ENCODE measurements at regions of chr14 and their contacts with region 1.

Region 1: DNA sequence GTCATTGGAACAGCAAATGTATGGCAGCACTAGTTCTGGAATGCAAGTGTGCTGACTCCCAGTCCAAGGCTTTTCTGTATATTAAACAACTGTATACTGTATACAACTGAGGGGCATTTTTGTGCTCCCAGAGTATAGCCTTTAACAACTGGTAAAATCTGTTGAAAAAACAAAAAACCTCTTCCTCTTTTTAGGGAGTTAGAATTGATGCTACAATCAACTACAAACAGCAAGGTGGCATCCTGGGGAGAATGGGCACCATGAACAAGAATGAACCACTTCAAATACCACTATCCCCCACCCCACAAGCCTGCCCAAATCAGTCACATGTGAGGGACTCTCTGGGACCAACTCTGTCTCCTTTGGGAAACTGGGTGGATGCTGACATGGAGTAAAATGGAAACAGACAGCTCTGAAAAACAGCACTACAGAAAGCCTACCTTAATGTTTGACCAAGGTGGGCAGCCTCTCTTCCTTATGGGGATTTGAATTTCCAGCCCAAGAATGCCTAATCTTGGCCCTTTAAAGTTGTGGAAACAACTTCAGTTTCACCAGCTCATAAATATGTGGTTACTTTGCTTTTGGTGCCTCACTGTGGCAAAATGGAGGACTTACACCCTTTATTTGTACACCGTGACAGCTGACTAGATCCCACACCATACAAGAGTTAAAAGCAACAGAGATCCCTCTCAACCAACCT is 7.5 kb downstream of the VTI1B start:
- DNase-seq: peak; percentile 56
- ATAC-seq: peak; percentile 90
- H3K4me3 ChIP-seq: no peak overlapping the region
- H3K27ac ChIP-seq: no peak overlapping the region
- H3K4me1 ChIP-seq: no peaks in the 10 kb centered on the region
- H3K27me3 ChIP-seq: no peaks in the 10 kb centered on the region
- CTCF ChIP-seq: peak; percentile 83
- EP300 ChIP-seq: no peak
- POLR2A ChIP-seq: no peak
- RAD21 ChIP-seq: peak; percentile 80

Region 2: DNA sequence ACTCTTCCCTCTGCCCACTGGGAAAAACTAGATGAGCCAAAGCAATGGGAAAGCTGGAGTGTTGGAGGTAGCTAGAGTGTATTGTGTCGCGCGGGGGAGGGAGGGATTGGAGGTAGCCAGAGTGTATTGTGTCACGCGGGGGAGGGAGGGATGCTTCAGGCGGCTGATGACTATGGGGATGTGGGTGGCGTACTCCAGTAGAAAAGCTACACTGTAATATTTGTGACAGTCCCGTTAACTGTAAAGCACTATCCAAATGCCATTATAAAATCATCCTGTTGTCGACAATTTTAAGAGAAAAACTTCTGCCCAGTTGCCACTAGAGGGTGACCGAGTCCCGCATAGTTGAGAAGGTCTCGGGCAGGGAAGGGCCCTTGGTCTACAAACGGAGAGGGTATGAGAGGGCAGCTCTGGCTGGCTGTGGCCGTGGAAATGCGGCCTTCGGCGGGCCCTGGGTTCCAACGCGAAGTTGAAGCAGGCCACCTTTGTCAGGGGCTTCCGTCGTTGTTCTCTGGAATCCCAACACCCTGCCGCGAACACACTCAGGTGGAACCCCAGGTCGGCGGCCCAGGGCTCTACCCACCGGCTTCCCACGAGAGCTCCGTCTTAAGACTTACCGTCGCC is 239.8 kb before region 1 on chr14:
- CTCF ChIA-PET with region 1: interaction called, 3 read pairs
- POLR2A ChIA-PET with region 1: no interaction called
- in situ Hi-C with region 1: no loop called
- intact Hi-C with region 1: loop called (anchors 10 kb)
- DNase-seq: peak; percentile 76
- ATAC-seq: peak; percentile 82
- H3K4me3 ChIP-seq: peak overlapping the region in 1 of 3 experiments; percentile 41; a peak in 1 of 6 replicates
- H3K27ac ChIP-seq: no peak overlapping the region
- H3K4me1 ChIP-seq: peaks cover 32% of the 10 kb centered on the region
- H3K27me3 ChIP-seq: peaks cover 0 to 6% of the 10 kb centered on the region in 2 experiments; a peak in 2 of 5 replicates
- CTCF ChIP-seq: peak; percentile 91
- EP300 ChIP-seq: no peak
- POLR2A ChIP-seq: no peak
- RAD21 ChIP-seq: peak; percentile 82

Region 3: GRCh38 chr14:67526676-67527459 is 140.0 kb before region 1 on chr14:
- CTCF ChIA-PET with region 1: interaction called, 5 read pairs
- POLR2A ChIA-PET with region 1: no interaction called
- in situ Hi-C with region 1: no loop called
- intact Hi-C with region 1: loop called (anchors 10 kb)
- DNase-seq: peak; percentile 43
- ATAC-seq: peak; percentile 96
- H3K4me3 ChIP-seq: no peak overlapping the region
- H3K27ac ChIP-seq: no peak overlapping the region
- H3K4me1 ChIP-seq: peaks cover 38% of the 10 kb centered on the region
- H3K27me3 ChIP-seq: peaks cover 0 to 14% of the 10 kb centered on the region in 2 experiments; a peak in 2 of 5 replicates
- CTCF ChIP-seq: peak; percentile 92
- EP300 ChIP-seq: no peak
- POLR2A ChIP-seq: no peak
- RAD21 ChIP-seq: peak; percentile 69

Region 4: GRCh38 chr14:67583711-67584644 is 82.9 kb before region 1 on chr14:
- CTCF ChIA-PET with region 1: interaction called, 49 read pairs
- POLR2A ChIA-PET with region 1: interaction called, 6 read pairs
- in situ Hi-C with region 1: loop called (anchors 10 kb)
- intact Hi-C with region 1: loop called (anchors 1 kb)
- DNase-seq: peak; percentile 58
- ATAC-seq: peak; percentile 94
- H3K4me3 ChIP-seq: no peak overlapping the region
- H3K27ac ChIP-seq: no peak overlapping the region
- H3K4me1 ChIP-seq: peaks cover 9% of the 10 kb centered on the region
- H3K27me3 ChIP-seq: no peaks in the 10 kb centered on the region
- CTCF ChIP-seq: peak; percentile 88
- EP300 ChIP-seq: no peak
- POLR2A ChIP-seq: no peak
- RAD21 ChIP-seq: peak; percentile 80

Region 5: GRCh38 chr14:67599698-67600561 is 67.0 kb before region 1 on chr14 and contains the start of gene PIGH:
- CTCF ChIA-PET with region 1: interaction called, 11 read pairs
- POLR2A ChIA-PET with region 1: interaction called, 7 read pairs
- in situ Hi-C with region 1: no loop called
- intact Hi-C with region 1: no loop called
- DNase-seq: peak; percentile 83
- ATAC-seq: peak; percentile 97
- H3K4me3 ChIP-seq: peak within 1 kb of the TSS; percentile 82 to 89 (median 87)
- H3K27ac ChIP-seq: peak within 1 kb of the TSS; percentile 74
- H3K4me1 ChIP-seq: peaks cover 43% of the 10 kb centered on the region
- H3K27me3 ChIP-seq: no peaks in the 10 kb centered on the region; a peak in 1 of 5 replicates
- CTCF ChIP-seq: peak; percentile 76
- EP300 ChIP-seq: peak in 1 of 2 experiments; percentile 42; a peak in 1 of 4 replicates
- POLR2A ChIP-seq: peak; percentile 62 to 72
- RAD21 ChIP-seq: peak; percentile 83
- total RNA-seq, gene PIGH: 18.7 and 30.0 TPM in 2 replicates

Region 6: DNA sequence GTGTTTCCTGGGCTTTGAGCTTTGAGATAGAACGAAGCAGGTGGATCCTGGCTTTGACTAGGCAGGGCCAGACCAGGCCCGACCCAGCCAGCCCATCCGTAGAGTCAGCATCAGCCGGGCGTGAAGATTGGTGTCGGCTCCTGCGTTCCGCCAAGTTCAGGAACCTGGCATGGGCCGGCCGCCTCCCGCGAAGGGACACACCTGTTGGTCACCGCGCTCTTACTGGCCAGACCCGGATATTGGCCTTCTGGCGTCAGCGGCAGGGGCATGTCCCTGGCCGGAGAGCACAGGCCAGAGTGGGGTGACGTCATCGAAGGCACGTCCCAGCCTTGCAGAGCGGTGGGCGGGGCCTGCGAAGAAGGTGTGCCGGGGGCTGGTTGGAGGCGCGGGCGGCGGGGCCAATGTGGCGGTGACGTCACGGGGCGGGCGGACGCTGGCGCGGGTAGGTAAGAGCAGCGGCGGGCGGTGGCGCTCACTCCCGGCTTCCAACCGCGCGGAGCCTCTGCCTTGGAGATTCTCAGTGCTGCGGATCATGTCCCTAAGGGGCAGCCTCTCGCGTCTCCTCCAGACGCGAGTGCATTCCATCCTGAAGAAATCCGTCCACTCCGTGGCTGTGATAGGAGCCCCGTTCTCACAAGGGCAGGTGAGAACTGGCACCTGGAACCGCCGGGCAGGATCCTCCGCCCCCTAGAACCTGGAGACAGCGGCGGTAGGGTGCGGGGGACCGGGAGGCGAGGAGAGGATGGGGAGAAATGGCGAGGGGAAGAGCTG is 47.3 kb before region 1 on chr14 and contains the start of gene ARG2:
- CTCF ChIA-PET with region 1: interaction called, 38 read pairs
- POLR2A ChIA-PET with region 1: interaction called, 3 read pairs
- in situ Hi-C with region 1: loop called (anchors 5 kb)
- intact Hi-C with region 1: loop called (anchors 1 kb)
- DNase-seq: peak; percentile 95
- ATAC-seq: peak; percentile 94
- H3K4me3 ChIP-seq: peak within 1 kb of the TSS; percentile 81 to 95 (median 88)
- H3K27ac ChIP-seq: peak within 1 kb of the TSS; percentile 61
- H3K4me1 ChIP-seq: peaks cover 51% of the 10 kb centered on the region
- H3K27me3 ChIP-seq: 0 out of 5 replicates have a peak, but pooled peaks cover 0 to 5% of the 10 kb centered on the region in 2 experiments
- CTCF ChIP-seq: peak; percentile 66
- EP300 ChIP-seq: no peak
- POLR2A ChIP-seq: peak; percentile 86 to 89
- RAD21 ChIP-seq: no peak
- total RNA-seq, gene ARG2: 37.5 and 59.7 TPM in 2 replicates

Region 7: DNA sequence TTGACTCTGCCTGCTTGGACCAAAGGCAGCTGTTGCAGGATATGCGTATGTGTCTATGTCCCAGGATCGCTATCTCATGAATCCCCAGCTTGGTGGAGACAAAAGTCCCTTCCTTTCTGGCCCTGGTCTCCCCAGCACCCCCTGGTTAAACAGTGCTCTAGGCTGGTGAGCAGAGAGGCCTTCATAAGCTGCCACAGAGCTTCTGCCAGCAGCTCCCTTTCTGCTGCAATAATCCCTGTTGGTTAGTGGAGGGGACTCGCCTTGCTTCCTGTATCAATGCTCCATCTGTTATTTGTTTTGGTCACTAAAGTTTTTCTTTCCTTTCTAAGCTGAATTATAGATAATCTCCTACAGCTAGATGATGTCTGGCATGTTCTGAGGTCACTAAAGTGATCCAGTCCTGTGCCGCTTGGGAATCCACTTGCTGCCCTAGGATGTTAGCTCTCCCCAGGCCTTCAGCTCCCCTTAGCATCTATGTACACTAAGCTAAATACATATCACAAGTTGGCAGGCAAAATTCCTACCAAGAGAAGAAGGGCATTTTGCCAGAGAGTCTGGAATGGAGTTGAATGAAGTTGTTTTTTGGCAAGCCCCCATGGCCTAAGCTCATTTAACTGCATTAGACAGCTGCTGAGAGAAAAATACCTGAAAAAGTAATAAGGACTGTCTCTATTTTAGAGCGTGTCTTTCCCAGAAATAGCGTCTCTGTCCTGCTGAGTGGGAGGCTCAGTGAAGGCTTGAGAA is 82.6 kb after region 1 on chr14:
- CTCF ChIA-PET with region 1: no interaction called
- POLR2A ChIA-PET with region 1: no interaction called
- in situ Hi-C with region 1: no loop called
- intact Hi-C with region 1: no loop called
- DNase-seq: no peak
- ATAC-seq: no peak
- H3K4me3 ChIP-seq: no peak overlapping the region
- H3K27ac ChIP-seq: no peak overlapping the region
- H3K4me1 ChIP-seq: no peaks in the 10 kb centered on the region
- H3K27me3 ChIP-seq: no peaks in the 10 kb centered on the region
- CTCF ChIP-seq: no peak
- EP300 ChIP-seq: no peak
- POLR2A ChIP-seq: no peak
- RAD21 ChIP-seq: no peak